MCF 10A (cell line): ENCODE measurements at regions of chr10 and their contacts with region 1.

Region 1: DNA sequence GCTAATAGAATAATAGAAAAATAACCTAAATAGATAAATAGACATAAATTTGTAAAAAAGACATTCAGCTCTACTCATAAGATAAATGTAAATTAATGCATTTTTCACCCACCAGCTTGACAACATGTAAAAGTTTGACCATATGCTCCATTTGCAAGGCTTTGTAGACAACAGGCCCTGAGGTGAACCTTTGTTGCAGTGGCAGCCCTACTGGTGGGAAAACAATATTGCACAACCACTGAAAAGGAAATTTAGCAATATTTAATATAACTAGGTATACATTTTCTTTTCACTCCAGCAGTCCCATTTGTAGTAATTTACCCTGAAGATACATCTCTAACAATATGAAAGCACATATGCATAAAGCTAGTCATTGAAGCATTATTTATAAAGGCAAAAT is 39.0 kb upstream of the ADRA2A start:
- DNase-seq: peak; percentile 13
- H3K4me3 Mint-ChIP-seq: no peak overlapping the region
- H3K27ac Mint-ChIP-seq: no peak overlapping the region
- H3K4me1 Mint-ChIP-seq: peaks cover 8% of the 10 kb centered on the region
- H3K27me3 Mint-ChIP-seq: no peaks in the 10 kb centered on the region
- CTCF ChIP-seq: no peak

Region 2: GRCh38 chr10:110918643-110919363 is 119.1 kb before region 1 on chr10 and contains the start of gene BBIP1:
- CTCF ChIA-PET with region 1: no interaction called
- POLR2A ChIA-PET with region 1: no interaction called
- intact Hi-C with region 1: loop called (anchors 5 kb)
- DNase-seq: peak; percentile 100
- H3K4me3 Mint-ChIP-seq: peak within 1 kb of the TSS; percentile 89
- H3K27ac Mint-ChIP-seq: peak within 1 kb of the TSS; percentile 100
- H3K4me1 Mint-ChIP-seq: peaks cover 22% of the 10 kb centered on the region
- H3K27me3 Mint-ChIP-seq: no peaks in the 10 kb centered on the region
- CTCF ChIP-seq: no peak
- total RNA-seq, gene BBIP1: 46.9 and 68.7 TPM in 2 replicates